Caco-2 (cell line): ENCODE measurements at regions of chr9 and their contacts with region 1.

Region 1: GRCh38 chr9:5628530-5629311 is at the start of gene RIC1:
- DNase-seq: peak; percentile 85 to 88
- H3K4me3 ChIP-seq: peak within 1 kb of the TSS; percentile 91
- H3K4me3 Mint-ChIP-seq: peak within 1 kb of the TSS; percentile 94
- H3K27ac Mint-ChIP-seq: peak within 1 kb of the TSS; percentile 88
- H3K4me1 ChIP-seq: peaks cover 34% of the 10 kb centered on the region
- H3K4me1 Mint-ChIP-seq: peaks cover 21% of the 10 kb centered on the region
- H3K27me3 ChIP-seq: no peaks in the 10 kb centered on the region
- H3K27me3 Mint-ChIP-seq: no peaks in the 10 kb centered on the region
- CTCF ChIP-seq: no peak
- total RNA-seq, gene RIC1: 18.6 and 19.4 TPM in 2 replicates

Region 2: GRCh38 chr9:5671711-5672353 is 43.1 kb after region 1 on chr9:
- CTCF ChIA-PET with region 1: no interaction called
- POLR2A ChIA-PET with region 1: interaction called, 5 read pairs
- intact Hi-C with region 1: loop called (anchors 5 kb)
- DNase-seq: peak; percentile 32 to 42
- H3K4me3 ChIP-seq: no peak overlapping the region
- H3K4me3 Mint-ChIP-seq: no peak overlapping the region
- H3K27ac Mint-ChIP-seq: peak overlapping the region; percentile 22
- H3K4me1 ChIP-seq: peaks cover 6% of the 10 kb centered on the region; the same call in 1 of the 2 replicates
- H3K4me1 Mint-ChIP-seq: peaks cover 17% of the 10 kb centered on the region
- H3K27me3 ChIP-seq: no peaks in the 10 kb centered on the region
- H3K27me3 Mint-ChIP-seq: no peaks in the 10 kb centered on the region
- CTCF ChIP-seq: no peak

Region 3: DNA sequence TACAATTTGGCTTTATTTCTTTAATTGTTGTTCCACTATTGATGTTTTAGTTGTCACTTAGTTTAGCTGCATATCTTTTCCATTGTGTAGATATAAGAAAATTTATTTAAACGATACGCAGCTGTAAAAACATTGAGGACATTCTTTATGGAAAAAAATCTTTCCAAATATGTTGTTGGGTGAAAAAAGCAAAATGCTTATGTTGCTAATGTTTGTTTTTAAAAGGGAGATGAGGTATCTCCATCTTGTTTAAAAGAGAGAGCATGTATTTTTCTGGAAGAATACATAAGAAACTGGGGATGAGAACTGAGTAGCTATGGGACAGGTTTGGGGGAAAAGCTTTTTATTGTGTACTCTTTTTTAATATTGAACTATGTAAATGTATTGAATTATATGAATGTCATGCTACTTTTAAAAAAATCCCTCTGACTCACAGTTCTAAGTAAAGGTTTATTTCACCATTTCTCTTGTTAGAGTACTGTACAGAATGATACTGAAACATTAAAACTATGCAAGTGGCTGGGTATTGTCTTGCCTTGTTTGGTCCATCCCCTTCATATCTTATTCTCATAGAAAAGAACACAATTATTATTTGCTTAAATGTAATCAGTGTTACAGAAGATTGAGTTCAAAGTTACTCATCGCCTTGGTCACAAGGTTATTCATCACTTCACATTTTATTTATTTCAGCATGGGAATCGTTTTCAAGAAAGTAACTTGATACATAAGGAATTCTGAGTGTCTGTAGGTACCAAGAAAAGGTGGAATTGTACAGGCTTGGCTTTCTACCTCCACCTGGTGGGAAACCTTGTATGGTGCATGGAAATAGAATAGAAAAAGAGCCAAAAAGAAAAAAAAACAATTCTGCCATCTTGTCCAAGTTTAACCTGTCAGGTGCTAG is 86.0 kb after region 1 on chr9:
- CTCF ChIA-PET with region 1: no interaction called
- POLR2A ChIA-PET with region 1: interaction called, 3 read pairs
- intact Hi-C with region 1: loop called (anchors 2 kb)
- DNase-seq: peak in 1 of 2 experiments; percentile 48
- H3K4me3 ChIP-seq: no peak overlapping the region
- H3K4me3 Mint-ChIP-seq: no peak overlapping the region
- H3K27ac Mint-ChIP-seq: no peak overlapping the region
- H3K4me1 ChIP-seq: peaks cover 20% of the 10 kb centered on the region
- H3K4me1 Mint-ChIP-seq: peaks cover 17% of the 10 kb centered on the region
- H3K27me3 ChIP-seq: no peaks in the 10 kb centered on the region
- H3K27me3 Mint-ChIP-seq: no peaks in the 10 kb centered on the region
- CTCF ChIP-seq: peak; percentile 53 to 59

Region 4: DNA sequence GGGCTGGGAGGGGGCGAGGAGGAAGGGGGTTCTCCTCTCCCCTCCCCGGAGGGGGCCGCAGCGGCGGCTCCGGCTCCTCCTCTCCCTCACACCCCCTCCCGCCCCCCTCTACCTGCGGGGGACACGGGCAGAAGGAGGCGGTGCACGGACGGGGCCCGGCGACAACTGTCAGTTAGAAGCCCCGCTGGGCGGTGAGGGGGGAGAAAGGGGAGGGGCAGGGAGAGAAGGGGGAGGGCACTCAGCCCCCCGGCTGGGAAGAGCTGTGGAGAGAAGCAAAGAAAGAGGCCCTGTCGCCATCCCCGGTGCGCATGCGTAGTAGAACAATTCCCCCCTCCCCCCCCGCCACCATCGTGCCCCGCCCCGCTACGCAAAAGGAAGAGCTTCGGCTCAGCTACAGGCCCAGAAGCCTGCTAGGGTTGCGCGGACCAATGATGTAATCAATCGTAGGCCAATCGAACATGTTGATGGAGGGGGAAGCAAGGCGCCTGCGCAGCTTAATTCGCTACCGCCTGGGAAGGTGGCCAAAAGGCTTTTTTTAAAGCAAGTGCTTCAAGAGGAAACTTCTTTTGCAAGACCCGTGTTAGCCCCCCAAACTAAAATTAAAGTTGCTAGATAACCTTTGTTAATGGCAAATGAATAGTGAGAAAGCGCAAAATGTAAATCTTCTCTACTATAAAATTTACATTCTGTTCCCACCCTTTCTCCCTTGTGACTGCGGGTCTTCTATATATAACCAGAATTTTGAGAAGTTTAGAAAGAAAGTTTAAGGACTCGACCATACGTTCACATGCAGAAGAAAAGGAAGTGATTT is 379.7 kb after region 1 on chr9:
- CTCF ChIA-PET with region 1: no interaction called
- POLR2A ChIA-PET with region 1: interaction called, 4 read pairs
- intact Hi-C with region 1: loop called (anchors 5 kb)
- DNase-seq: peak; percentile 89 to 95
- H3K4me3 ChIP-seq: peak overlapping the region; percentile 70
- H3K4me3 Mint-ChIP-seq: peak overlapping the region; percentile 89
- H3K27ac Mint-ChIP-seq: peak overlapping the region; percentile 19
- H3K4me1 ChIP-seq: peaks cover 7% of the 10 kb centered on the region; the same call in 1 of the 2 replicates
- H3K4me1 Mint-ChIP-seq: peaks cover 19% of the 10 kb centered on the region
- H3K27me3 ChIP-seq: no peaks in the 10 kb centered on the region
- H3K27me3 Mint-ChIP-seq: no peaks in the 10 kb centered on the region
- CTCF ChIP-seq: no peak

Region 5: GRCh38 chr9:6450641-6451375 is 822.1 kb after region 1 on chr9:
- CTCF ChIA-PET with region 1: no interaction called
- POLR2A ChIA-PET with region 1: no interaction called
- intact Hi-C with region 1: no loop called
- DNase-seq: no peak
- H3K4me3 ChIP-seq: no peak overlapping the region
- H3K4me3 Mint-ChIP-seq: no peak overlapping the region
- H3K27ac Mint-ChIP-seq: no peak overlapping the region
- H3K4me1 ChIP-seq: peaks cover 26% of the 10 kb centered on the region
- H3K4me1 Mint-ChIP-seq: peaks cover 31% of the 10 kb centered on the region
- H3K27me3 ChIP-seq: no peaks in the 10 kb centered on the region
- H3K27me3 Mint-ChIP-seq: no peaks in the 10 kb centered on the region
- CTCF ChIP-seq: no peak